ENCODE measurements at regions of chr5 and their contacts with region 1.

Region 1: GRCh38 chr5:172564188-172564587 is 76.9 kb upstream of the NEURL1B start:
- DNase-seq: no peak
- H3K4me3 ChIP-seq: no peak overlapping the region
- H3K27ac ChIP-seq: no peak overlapping the region
- H3K4me1 ChIP-seq: no peaks in the 10 kb centered on the region
- H3K27me3 ChIP-seq: no peaks in the 10 kb centered on the region; a peak in 2 of 7 replicates
- CTCF ChIP-seq: no peak
- EP300 ChIP-seq: no peak
- POLR2A ChIP-seq: no peak
- RAD21 ChIP-seq: no peak

Region 2: DNA sequence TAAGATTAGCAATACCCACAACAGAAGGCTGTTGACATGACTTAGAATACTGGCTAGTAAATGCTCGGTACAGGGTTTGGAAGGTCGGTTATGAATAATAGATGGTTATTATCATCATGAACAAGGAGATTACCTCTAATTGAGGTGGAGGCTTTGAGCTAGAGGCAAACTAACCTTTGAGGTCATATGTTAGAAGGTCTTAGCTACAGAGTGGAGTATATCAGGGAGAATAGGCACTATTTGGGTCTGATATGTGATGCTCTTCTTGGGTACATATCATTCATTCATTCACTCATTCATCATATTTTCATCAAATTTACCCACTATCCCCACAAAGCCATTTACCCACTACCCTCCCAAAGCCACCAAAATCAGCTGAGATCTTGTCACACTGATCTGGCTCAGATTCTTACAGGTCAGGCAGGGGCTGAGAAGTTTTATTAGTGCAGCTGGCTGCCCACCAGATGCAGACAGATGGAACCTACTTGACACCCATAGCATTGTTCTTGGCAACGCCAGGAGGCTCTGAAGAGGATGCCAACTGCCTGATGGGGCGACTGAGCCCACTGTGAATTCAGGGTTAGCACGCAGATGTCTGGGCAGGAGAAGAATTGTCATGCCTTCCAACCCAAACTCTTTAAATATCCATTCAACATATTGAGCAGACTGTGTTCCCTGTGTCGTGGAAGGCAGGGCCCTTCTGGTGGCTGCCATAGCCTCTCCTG is 19.7 kb before region 1 on chr5:
- CTCF ChIA-PET with region 1: interaction called, 10 read pairs
- POLR2A ChIA-PET with region 1: interaction called, 3 read pairs
- DNase-seq: no peak
- H3K4me3 ChIP-seq: no peak overlapping the region
- H3K27ac ChIP-seq: no peak overlapping the region
- H3K4me1 ChIP-seq: peaks cover 0 to 8% (median 2%) of the 10 kb centered on the region in 4 experiments; a peak in 4 of 7 replicates
- H3K27me3 ChIP-seq: peaks cover 0 to 2% (median 0%) of the 10 kb centered on the region in 4 experiments; a peak in 3 of 7 replicates
- CTCF ChIP-seq: no peak
- EP300 ChIP-seq: no peak
- POLR2A ChIP-seq: no peak
- RAD21 ChIP-seq: no peak